MCF 10A (cell line): ENCODE measurements at regions of chr11 and their contacts with region 1.

Region 1: GRCh38 chr11:131408025-131408640 is 37.7 kb downstream of the NTM start:
- DNase-seq: no peak
- H3K4me3 Mint-ChIP-seq: no peak overlapping the region
- H3K27ac Mint-ChIP-seq: no peak overlapping the region
- H3K4me1 Mint-ChIP-seq: no peaks in the 10 kb centered on the region
- H3K27me3 Mint-ChIP-seq: no peaks in the 10 kb centered on the region
- CTCF ChIP-seq: peak; percentile 28

Region 2: DNA sequence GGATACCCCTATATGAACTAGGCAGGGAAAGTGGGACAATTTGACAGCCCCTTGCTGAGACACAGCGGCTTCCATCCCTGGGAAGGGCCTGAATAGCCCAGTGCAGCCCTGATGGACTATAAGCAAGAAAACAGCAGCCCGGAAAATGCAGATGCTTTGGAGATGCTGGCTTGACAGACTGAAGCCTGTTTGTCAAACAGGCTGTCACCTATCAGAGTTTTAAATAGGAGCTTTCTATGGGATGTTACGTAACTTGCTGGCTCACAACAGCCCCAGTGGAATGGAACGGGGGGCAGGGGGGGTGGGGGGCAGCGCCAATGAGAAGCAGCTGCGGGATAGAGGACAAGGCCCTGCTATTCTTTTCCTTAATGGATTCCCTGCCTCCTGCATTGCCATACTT is 129.7 kb before region 1 on chr11:
- CTCF ChIA-PET with region 1: no interaction called
- POLR2A ChIA-PET with region 1: no interaction called
- intact Hi-C with region 1: no loop called
- DNase-seq: no peak
- H3K4me3 Mint-ChIP-seq: no peak overlapping the region
- H3K27ac Mint-ChIP-seq: no peak overlapping the region
- H3K4me1 Mint-ChIP-seq: no peaks in the 10 kb centered on the region
- H3K27me3 Mint-ChIP-seq: no peaks in the 10 kb centered on the region
- CTCF ChIP-seq: no peak

Region 3: GRCh38 chr11:131423715-131424114 is 15.6 kb after region 1 on chr11:
- CTCF ChIA-PET with region 1: no interaction called
- POLR2A ChIA-PET with region 1: no interaction called
- intact Hi-C with region 1: no loop called
- DNase-seq: no peak
- H3K4me3 Mint-ChIP-seq: no peak overlapping the region
- H3K27ac Mint-ChIP-seq: no peak overlapping the region
- H3K4me1 Mint-ChIP-seq: no peaks in the 10 kb centered on the region
- H3K27me3 Mint-ChIP-seq: no peaks in the 10 kb centered on the region
- CTCF ChIP-seq: no peak

Region 4: GRCh38 chr11:131511794-131512193 is 103.7 kb after region 1 on chr11:
- CTCF ChIA-PET with region 1: no interaction called
- POLR2A ChIA-PET with region 1: no interaction called
- intact Hi-C with region 1: loop called (anchors 1 kb)
- DNase-seq: no peak
- H3K4me3 Mint-ChIP-seq: no peak overlapping the region
- H3K27ac Mint-ChIP-seq: no peak overlapping the region
- H3K4me1 Mint-ChIP-seq: no peaks in the 10 kb centered on the region
- H3K27me3 Mint-ChIP-seq: no peaks in the 10 kb centered on the region
- CTCF ChIP-seq: no peak